CD4-positive, alpha-beta T cell (primary cell): ENCODE measurements at regions of chr6 and their contacts with region 1.

Region 1: GRCh38 chr6:10404107-10404798 is 10.6 kb downstream of the TFAP2A start:
- DNase-seq: peak; percentile 59 to 93 (median 74)
- ATAC-seq: peak; percentile 86
- H3K4me3 ChIP-seq: peak overlapping the region; percentile 63
- H3K4me3 Mint-ChIP-seq: peak overlapping the region; percentile 89
- H3K27ac ChIP-seq: peak overlapping the region in 1 of 2 donors; percentile 54
- H3K27ac Mint-ChIP-seq: peak overlapping the region; percentile 59
- H3K4me1 ChIP-seq: peaks cover 16% of the 10 kb centered on the region
- H3K4me1 Mint-ChIP-seq: peaks cover 10% of the 10 kb centered on the region
- H3K27me3 ChIP-seq: peaks cover 36 to 38% of the 10 kb centered on the region in 2 experiments
- H3K27me3 Mint-ChIP-seq: peaks cover 65% of the 10 kb centered on the region
- CTCF ChIP-seq: no peak

Region 2: DNA sequence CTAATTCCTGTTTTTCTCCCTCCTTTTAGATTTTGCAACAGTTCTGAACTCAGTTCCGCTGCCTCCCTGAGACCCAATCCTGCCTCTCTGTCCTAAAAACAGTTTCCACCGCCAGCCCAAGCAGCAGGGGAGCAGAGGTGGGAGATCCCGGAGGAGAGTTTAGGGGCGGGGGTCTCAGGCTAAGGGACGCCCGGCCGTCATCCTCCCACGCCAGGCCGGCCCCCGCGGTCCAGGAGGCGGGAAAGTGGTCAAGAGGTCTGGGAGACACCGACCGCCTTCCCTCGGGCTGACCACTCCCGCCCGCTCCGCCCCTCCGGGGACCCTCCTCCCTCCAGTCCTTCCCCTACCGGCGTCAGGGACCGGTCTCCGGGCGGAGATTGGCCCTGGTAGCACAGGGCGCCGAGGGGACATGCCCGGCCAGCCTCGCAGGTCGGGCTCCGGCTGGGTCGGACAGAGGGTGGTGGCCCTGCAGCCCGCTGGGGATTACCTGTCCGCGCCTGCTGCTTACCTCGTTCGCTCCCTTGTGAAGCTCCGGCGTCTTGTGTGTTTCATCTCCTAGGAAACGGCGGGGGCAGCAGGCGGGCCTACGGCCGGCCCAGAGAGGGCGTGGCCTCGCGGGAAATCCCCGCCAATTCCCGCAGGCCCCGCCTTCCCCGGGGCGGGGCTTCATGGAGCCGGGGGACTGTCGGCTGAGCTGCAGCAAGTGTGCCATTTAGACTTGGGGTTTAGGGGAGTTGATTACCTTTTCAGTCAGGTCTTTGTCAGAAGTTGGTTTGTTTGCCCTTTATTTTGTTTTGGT is 433.9 kb after region 1 on chr6 and contains the start of gene MAK:
- CTCF ChIA-PET with region 1: no interaction called
- POLR2A ChIA-PET with region 1: no interaction called
- intact Hi-C with region 1: loop called in 1 of 2 experiments (anchors 10 kb)
- DNase-seq: peak; percentile 68 to 95 (median 82)
- ATAC-seq: peak; percentile 97
- H3K4me3 ChIP-seq: peak within 1 kb of the TSS; percentile 62
- H3K4me3 Mint-ChIP-seq: peak within 1 kb of the TSS; percentile 79
- H3K27ac ChIP-seq: no peak within 1 kb of the TSS
- H3K27ac Mint-ChIP-seq: peak within 1 kb of the TSS; percentile 60
- H3K4me1 ChIP-seq: peaks cover 21% of the 10 kb centered on the region
- H3K4me1 Mint-ChIP-seq: peaks cover 21% of the 10 kb centered on the region
- H3K27me3 ChIP-seq: peaks cover 31 to 48% of the 10 kb centered on the region in 2 experiments
- H3K27me3 Mint-ChIP-seq: peaks cover 66% of the 10 kb centered on the region
- CTCF ChIP-seq: no peak
- total RNA-seq, gene MAK: 0.47 to 0.73 TPM